BJ (cell line): ENCODE measurements at regions of chr17 and their contacts with region 1.

Region 1: DNA sequence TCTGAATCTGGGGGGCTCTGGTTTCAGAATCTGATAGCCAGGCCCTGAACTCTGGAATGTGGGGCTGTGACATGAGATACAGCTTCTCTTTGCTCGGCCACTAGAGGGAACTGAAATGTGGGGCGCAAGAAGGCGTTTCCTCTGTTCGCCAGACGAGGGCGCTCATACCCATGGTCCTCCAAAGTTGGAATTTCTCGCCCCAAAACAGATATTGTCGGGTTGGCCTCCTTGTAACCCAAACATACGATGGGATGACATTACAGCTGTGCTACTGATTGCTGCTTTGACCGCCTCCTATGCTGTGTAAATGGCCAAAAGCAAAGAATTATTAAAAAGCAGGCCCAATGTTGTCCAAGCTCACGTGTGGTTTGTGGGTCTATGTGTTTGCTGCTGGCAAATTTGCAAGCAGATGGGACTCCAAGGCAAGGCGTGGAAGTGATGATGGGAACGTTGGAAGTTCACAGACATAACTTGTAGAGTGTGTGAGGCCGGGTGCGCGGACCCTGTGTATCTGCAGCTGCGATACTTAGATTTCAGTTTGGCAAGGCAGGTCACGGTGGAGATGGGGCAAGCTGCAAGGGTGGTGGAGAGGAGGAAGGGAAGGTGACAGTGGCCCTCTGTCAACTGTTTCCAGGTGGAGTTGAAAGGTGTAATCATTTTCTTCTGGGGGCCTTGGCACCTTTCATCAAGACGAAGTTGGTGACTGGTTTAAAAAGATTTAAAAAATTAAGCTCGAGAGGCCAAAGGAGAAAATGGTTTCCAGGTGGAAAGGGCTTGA is 13.0 kb upstream of the MSI2 start:
- DNase-seq: no peak
- H3K4me3 ChIP-seq: no peak overlapping the region
- H3K27me3 ChIP-seq: peaks cover 2% of the 10 kb centered on the region
- CTCF ChIP-seq: peak; percentile 100

Region 2: DNA sequence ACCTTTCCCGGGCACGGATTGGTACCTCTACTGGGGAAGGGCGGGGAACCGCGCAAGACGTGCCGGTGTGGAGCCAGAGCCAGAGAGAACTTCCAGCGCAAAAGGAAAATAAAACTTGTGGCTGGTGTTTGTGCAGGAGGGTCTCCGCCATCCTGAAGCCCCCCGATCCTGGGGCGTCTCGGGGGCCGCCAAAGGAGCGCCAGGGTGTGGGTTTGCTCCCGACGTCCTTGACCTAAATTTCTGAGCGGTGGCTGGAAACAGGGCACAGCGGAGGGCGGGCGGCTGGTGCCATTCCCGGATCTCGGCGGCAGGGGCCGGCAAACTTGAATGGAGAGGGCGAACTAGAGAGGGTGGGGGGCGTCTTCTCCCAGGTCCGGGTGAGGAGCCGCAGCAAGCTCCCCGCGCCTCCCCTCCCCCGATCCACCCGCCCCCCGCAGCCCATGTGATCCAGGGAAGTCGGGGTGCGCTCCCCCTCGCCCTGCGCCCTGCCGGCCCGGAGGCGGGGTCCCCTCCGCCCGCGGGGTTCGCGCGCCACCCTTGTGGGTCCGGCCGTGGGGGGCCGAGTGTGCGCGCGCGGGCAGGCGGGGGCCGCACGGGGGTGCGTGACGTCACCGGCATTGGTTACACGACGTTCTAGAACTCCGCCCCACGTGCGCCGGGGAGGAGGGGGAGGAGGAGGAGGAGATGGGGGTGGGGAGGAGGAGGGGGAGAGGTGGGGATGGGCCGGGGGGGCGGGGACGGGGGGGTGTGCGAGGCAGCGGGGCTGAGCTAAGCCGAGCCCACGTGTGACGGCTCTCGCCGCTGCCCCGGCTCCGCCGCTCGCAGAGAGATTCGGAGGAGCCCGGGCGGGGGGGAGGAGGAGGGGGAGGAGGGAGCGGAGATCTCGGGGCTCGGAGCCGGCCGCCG is 12.7 kb after region 1 on chr17 and contains the start of gene MSI2:
- CTCF ChIA-PET with region 1: interaction called, 42 read pairs
- POLR2A ChIA-PET with region 1: no interaction called
- DNase-seq: no peak
- H3K4me3 ChIP-seq: peak within 1 kb of the TSS; percentile 63
- H3K27me3 ChIP-seq: peaks cover 8% of the 10 kb centered on the region
- CTCF ChIP-seq: peak; percentile 7; the same call in 1 of the 2 replicates
- polyA plus RNA-seq, gene MSI2: 9.2 and 11.6 TPM in 2 replicates

Region 3: DNA sequence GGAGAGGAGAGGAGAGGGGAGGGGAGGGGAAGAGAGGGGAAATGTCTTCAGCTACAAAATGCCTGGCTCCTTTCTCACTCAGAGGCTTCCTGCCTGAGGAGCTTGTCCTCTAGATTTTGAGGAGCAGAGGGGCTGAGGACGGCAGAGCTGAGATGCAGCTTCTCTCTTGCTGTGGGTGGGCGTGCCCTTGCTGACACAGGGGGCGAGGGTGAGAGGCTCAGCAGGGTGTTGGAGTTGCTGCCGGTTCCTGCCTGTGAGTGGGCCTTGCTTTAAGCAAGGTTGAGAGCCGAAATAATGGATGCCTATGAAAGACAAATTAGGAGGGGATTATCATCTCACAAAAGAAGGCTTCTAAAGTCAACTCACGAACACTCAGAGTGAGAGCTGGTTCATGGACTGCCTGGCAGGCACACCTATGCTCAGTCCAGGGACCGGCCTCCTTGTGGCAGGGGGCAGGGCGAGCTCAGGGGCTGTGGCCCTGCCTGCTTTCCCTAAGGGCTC is 228.6 kb after region 1 on chr17:
- CTCF ChIA-PET with region 1: interaction called, 13 read pairs
- POLR2A ChIA-PET with region 1: no interaction called
- DNase-seq: no peak
- H3K4me3 ChIP-seq: no peak overlapping the region
- H3K27me3 ChIP-seq: no peaks in the 10 kb centered on the region; the same call in 1 of the 2 replicates
- CTCF ChIP-seq: no peak

Region 4: GRCh38 chr17:57671667-57672632 is 428.6 kb after region 1 on chr17:
- CTCF ChIA-PET with region 1: interaction called, 59 read pairs
- POLR2A ChIA-PET with region 1: no interaction called
- DNase-seq: peak; percentile 13
- H3K4me3 ChIP-seq: no peak overlapping the region
- H3K27me3 ChIP-seq: no peaks in the 10 kb centered on the region
- CTCF ChIP-seq: peak; percentile 99

Region 5: GRCh38 chr17:57783106-57783742 is 539.9 kb after region 1 on chr17:
- CTCF ChIA-PET with region 1: interaction called, 13 read pairs
- POLR2A ChIA-PET with region 1: no interaction called
- DNase-seq: no peak
- H3K4me3 ChIP-seq: no peak overlapping the region
- H3K27me3 ChIP-seq: peaks cover 10% of the 10 kb centered on the region
- CTCF ChIP-seq: peak; percentile 75